Spleen (tissue), 13 donors: ENCODE measurements at regions of chr6 and their contacts with region 1.

Region 1: DNA sequence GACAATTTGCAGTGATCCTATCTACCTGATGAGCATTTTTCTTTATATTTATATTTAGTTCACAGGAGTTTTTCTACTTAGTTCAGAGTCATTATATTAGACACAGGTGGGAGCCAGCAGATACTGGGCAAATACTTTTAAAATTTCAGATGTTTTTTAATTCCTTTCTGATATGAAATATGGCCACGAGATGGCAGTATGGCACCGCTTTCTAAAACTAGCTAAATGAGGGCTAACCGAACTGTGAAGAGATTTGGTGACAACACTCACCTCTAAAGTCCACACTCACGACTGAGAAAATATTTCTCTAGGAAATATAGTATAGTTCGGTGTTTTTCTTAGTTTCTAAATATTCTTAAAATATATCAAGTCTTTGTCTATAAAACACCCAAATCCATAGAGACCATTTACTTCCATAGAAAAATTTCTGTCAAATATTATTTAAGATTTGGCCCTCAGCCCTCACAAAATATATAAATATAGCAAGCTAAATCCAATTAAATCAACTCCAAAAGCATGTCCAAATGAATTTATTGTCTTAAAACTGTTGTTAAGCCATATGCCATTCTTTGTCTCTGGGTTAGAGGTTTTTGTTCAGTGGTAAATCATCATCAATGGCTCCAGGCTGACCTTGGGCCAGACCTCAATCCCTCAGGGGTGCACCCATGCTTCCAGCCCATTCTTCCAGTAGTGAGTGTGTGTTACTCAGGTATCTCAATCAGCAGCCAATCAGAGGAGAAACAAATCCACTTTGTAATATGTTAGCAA is 63.6 kb downstream of the HUS1B start:
- DNase-seq: no peak
- H3K4me3 ChIP-seq: no peak overlapping the region
- H3K27ac ChIP-seq: no peak overlapping the region
- H3K4me1 ChIP-seq: peaks cover 0 to 5% (median 0%) of the 10 kb centered on the region in 6 donors
- H3K27me3 ChIP-seq: no peaks in the 10 kb centered on the region
- CTCF ChIP-seq: peak; percentile 38 to 74 (median 63)
- POLR2A ChIP-seq: no peak

Region 2: GRCh38 chr6:722077-722524 is 128.8 kb after region 1 on chr6:
- intact Hi-C with region 1: loop called (anchors 5 kb)
- DNase-seq: peak; percentile 86
- H3K4me3 ChIP-seq: no peak overlapping the region
- H3K27ac ChIP-seq: no peak overlapping the region
- H3K4me1 ChIP-seq: peaks cover 4 to 12% (median 6%) of the 10 kb centered on the region in 6 donors
- H3K27me3 ChIP-seq: peaks cover 0 to 18% (median 0%) of the 10 kb centered on the region in 7 donors
- CTCF ChIP-seq: peak in 10 of 11 experiments; percentile 38 to 90 (median 83)
- POLR2A ChIP-seq: no peak

Region 3: GRCh38 chr6:786946-787763 is 193.8 kb after region 1 on chr6:
- intact Hi-C with region 1: loop called (anchors 5 kb)
- DNase-seq: no peak
- H3K4me3 ChIP-seq: no peak overlapping the region
- H3K27ac ChIP-seq: no peak overlapping the region
- H3K4me1 ChIP-seq: no peaks in the 10 kb centered on the region
- H3K27me3 ChIP-seq: peaks cover 0 to 35% (median 8%) of the 10 kb centered on the region in 7 donors
- CTCF ChIP-seq: peak; percentile 14 to 54 (median 44)
- POLR2A ChIP-seq: no peak

Region 4: DNA sequence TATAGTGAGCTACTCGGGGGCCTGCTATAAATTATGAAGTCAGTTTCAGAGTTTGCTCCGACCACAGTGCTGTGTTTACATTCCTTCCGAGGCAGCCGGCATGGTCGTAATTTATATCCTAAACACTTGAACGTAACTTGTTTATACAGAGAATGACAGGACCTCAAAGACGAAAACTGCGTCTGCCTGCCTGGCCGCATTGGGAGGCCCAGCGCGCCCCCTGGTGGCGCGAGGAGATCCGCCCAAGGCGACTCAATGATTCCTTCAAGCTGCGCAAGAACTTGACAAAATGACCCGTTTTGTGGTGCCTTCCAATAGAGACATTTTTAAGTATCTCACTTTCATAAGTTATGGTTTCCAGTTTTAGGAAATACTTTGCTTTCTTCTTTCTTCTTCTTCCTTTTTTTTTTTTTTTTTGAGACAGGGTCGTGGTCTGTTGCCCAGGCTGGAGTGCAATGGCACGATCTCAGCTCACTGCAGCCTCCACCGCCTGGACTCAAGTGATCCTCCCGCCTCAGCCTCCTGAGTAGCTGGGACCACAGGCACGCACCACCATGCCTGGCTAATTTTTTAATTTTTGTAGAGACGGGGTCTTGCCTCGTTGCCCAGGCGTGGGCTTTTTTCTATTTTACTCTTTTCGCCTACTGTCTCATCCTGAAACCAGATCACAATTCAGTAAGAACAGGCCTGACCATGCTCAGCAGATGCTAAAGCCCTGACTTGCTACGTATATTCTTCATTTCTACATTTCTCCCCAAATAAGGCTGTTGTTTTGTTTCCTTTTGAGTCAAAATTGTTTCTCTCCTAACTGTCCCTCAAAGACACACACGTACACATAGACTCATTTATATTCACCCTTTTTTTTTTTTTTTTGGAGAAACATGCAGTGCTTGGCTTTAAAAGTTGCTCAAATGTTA is 803.9 kb after region 1 on chr6:
- intact Hi-C with region 1: loop called (anchors 5 kb)
- DNase-seq: peak; percentile 89
- H3K4me3 ChIP-seq: no peak overlapping the region
- H3K27ac ChIP-seq: no peak overlapping the region
- H3K4me1 ChIP-seq: peaks cover 3 to 30% (median 21%) of the 10 kb centered on the region in 6 donors
- H3K27me3 ChIP-seq: peaks cover 0 to 100% (median 72%) of the 10 kb centered on the region in 7 donors
- CTCF ChIP-seq: peak; percentile 33 to 92 (median 81)
- POLR2A ChIP-seq: no peak

Region 5: GRCh38 chr6:1436334-1437306 is 843.3 kb after region 1 on chr6:
- intact Hi-C with region 1: loop called (anchors 10 kb)
- DNase-seq: no peak
- H3K4me3 ChIP-seq: no peak overlapping the region
- H3K27ac ChIP-seq: no peak overlapping the region
- H3K4me1 ChIP-seq: peaks cover 0 to 5% (median 0%) of the 10 kb centered on the region in 6 donors
- H3K27me3 ChIP-seq: peaks cover 0 to 66% (median 29%) of the 10 kb centered on the region in 7 donors
- CTCF ChIP-seq: peak; percentile 43 to 83 (median 64)
- POLR2A ChIP-seq: no peak